Mammary epithelial cell (primary cell): ENCODE measurements at regions of chr3 and their contacts with region 1.

Region 1: GRCh38 chr3:138935848-138936740 is 10.8 kb downstream of the FOXL2 start:
- DNase-seq: peak; percentile 39
- H3K4me3 ChIP-seq: peak overlapping the region; percentile 15 to 50 (median 44)
- H3K27ac ChIP-seq: no peak overlapping the region
- H3K4me1 ChIP-seq: peaks cover 19% of the 10 kb centered on the region
- H3K27me3 ChIP-seq: peaks cover 36% of the 10 kb centered on the region
- CTCF ChIP-seq: peak; percentile 63 to 87

Region 2: GRCh38 chr3:138974462-138974861 is 38.4 kb after region 1 on chr3:
- CTCF ChIA-PET with region 1: interaction called, 6 read pairs
- dilution Hi-C with region 1: no loop called
- in situ Hi-C with region 1: no loop called
- intact Hi-C with region 1: loop called (anchors 1 kb)
- DNase-seq: peak; percentile 34
- H3K4me3 ChIP-seq: no peak overlapping the region
- H3K27ac ChIP-seq: no peak overlapping the region
- H3K4me1 ChIP-seq: no peaks in the 10 kb centered on the region
- H3K27me3 ChIP-seq: no peaks in the 10 kb centered on the region
- CTCF ChIP-seq: no peak

Region 3: GRCh38 chr3:139319428-139320402 is 383.6 kb after region 1 on chr3:
- CTCF ChIA-PET with region 1: no interaction called
- dilution Hi-C with region 1: no loop called
- in situ Hi-C with region 1: loop called in 1 of 2 experiments (anchors 10 kb)
- intact Hi-C with region 1: no loop called
- DNase-seq: no peak
- H3K4me3 ChIP-seq: no peak overlapping the region
- H3K27ac ChIP-seq: no peak overlapping the region
- H3K4me1 ChIP-seq: peaks cover 18% of the 10 kb centered on the region
- H3K27me3 ChIP-seq: no peaks in the 10 kb centered on the region
- CTCF ChIP-seq: peak; percentile 32 to 37

Region 4: GRCh38 chr3:139343895-139344856 is 408.1 kb after region 1 on chr3 and contains the start of gene MRPS22:
- CTCF ChIA-PET with region 1: no interaction called
- dilution Hi-C with region 1: no loop called
- in situ Hi-C with region 1: loop called in 1 of 2 experiments (anchors 10 kb)
- intact Hi-C with region 1: no loop called
- DNase-seq: peak; percentile 88
- H3K4me3 ChIP-seq: peak within 1 kb of the TSS; percentile 81 to 97 (median 97)
- H3K27ac ChIP-seq: peak within 1 kb of the TSS; percentile 94
- H3K4me1 ChIP-seq: peaks cover 21% of the 10 kb centered on the region
- H3K27me3 ChIP-seq: no peaks in the 10 kb centered on the region
- CTCF ChIP-seq: no peak
- total RNA-seq, gene MRPS22: 46.3 to 54.3 TPM